HAP-1 (cell line): ENCODE measurements at regions of chr16 and their contacts with region 1.

Region 1: GRCh38 chr16:55824473-55825000 is 8.4 kb downstream of the CES1 start:
- DNase-seq: no peak
- H3K4me3 ChIP-seq: no peak overlapping the region
- H3K4me1 ChIP-seq: no peaks in the 10 kb centered on the region
- H3K27me3 ChIP-seq: no peaks in the 10 kb centered on the region

Region 2: DNA sequence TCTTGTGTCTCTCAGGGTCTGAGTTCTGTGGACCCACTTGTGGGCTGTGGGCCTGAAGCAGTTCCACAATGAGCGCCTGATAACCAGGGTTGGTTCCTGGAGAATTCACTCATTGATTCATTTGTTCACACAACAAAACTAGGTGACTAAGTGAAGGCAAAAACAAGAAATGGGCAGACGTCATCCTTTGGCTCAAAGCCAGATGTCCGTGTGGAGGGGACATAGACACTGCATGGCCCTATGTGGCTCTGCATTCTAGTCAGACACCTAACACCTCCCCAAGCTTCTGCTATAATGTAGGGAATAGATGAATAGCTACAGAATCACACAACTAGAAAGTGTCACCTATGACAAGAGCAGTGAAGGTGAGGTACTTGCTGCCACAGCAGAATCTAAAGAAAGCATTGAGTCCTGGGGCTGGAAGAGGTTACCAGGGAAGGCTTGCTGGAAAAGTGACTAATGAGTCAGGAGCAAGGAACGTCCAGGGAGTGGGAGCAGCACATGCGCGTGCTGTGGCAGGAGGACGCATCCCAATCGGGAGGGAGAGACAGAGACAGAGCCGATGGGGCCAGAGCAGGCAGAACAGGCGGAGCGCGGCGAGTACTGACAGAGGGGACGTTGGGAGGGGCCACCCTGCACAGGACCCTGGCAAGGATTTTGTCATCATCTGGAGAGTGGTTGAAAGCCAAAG is 50.5 kb before region 1 on chr16:
- in situ Hi-C with region 1: loop called (anchors 10 kb)
- DNase-seq: no peak
- H3K4me3 ChIP-seq: no peak overlapping the region
- H3K4me1 ChIP-seq: no peaks in the 10 kb centered on the region
- H3K27me3 ChIP-seq: no peaks in the 10 kb centered on the region